PC-3 (cell line): ENCODE measurements at regions of chrX and their contacts with region 1.

Region 1: GRCh38 chrX:22889819-22890218 is 109.9 kb upstream of the DDX53 start:
- DNase-seq: peak; percentile 4
- ATAC-seq: peak; percentile 40
- H3K4me3 ChIP-seq: no peak overlapping the region
- H3K27ac ChIP-seq: peak overlapping the region; percentile 54
- H3K4me1 ChIP-seq: peaks cover 26% of the 10 kb centered on the region
- H3K27me3 ChIP-seq: no peaks in the 10 kb centered on the region
- CTCF ChIP-seq: no peak

Region 2: GRCh38 chrX:22399437-22400192 is 490.2 kb before region 1 on chrX:
- CTCF ChIA-PET with region 1: no interaction called
- POLR2A ChIA-PET with region 1: no interaction called
- intact Hi-C with region 1: no loop called
- DNase-seq: peak; percentile 33
- ATAC-seq: peak; percentile 42; the same call in 1 of the 2 replicates
- H3K4me3 ChIP-seq: no peak overlapping the region
- H3K27ac ChIP-seq: peak overlapping the region; percentile 12; the same call in 1 of the 2 replicates
- H3K4me1 ChIP-seq: peaks cover 11% of the 10 kb centered on the region
- H3K27me3 ChIP-seq: no peaks in the 10 kb centered on the region
- CTCF ChIP-seq: no peak

Region 3: GRCh38 chrX:22810876-22811275 is 78.9 kb before region 1 on chrX:
- CTCF ChIA-PET with region 1: no interaction called
- POLR2A ChIA-PET with region 1: no interaction called
- intact Hi-C with region 1: loop called (anchors 2 kb)
- DNase-seq: peak; percentile 1
- ATAC-seq: peak; percentile 68
- H3K4me3 ChIP-seq: no peak overlapping the region
- H3K27ac ChIP-seq: no peak overlapping the region
- H3K4me1 ChIP-seq: peaks cover 9% of the 10 kb centered on the region
- H3K27me3 ChIP-seq: no peaks in the 10 kb centered on the region
- CTCF ChIP-seq: no peak

Region 4: DNA sequence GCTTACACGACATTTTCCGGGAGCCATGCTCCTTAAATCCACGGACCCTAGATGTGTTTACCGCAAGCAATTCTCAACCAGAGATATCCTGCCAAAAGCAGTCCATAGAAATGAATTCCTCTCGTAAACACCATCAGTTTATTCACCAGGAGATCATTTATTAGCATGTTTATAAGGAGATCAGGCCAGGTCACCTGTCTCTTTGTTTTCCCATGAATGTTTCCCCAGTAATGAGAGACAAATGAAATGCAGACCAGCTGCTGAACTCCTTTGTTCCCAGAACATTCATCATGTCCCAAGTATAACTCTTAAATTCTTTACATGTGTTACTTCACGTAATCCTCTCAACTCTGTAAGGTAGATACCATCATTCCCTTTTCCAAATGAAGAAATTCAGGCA is 247.0 kb after region 1 on chrX:
- CTCF ChIA-PET with region 1: no interaction called
- POLR2A ChIA-PET with region 1: no interaction called
- intact Hi-C with region 1: no loop called
- DNase-seq: no peak
- ATAC-seq: no peak
- H3K4me3 ChIP-seq: no peak overlapping the region
- H3K27ac ChIP-seq: no peak overlapping the region
- H3K4me1 ChIP-seq: no peaks in the 10 kb centered on the region
- H3K27me3 ChIP-seq: no peaks in the 10 kb centered on the region
- CTCF ChIP-seq: no peak

Region 5: GRCh38 chrX:23292988-23293651 is 403.3 kb after region 1 on chrX:
- CTCF ChIA-PET with region 1: no interaction called
- POLR2A ChIA-PET with region 1: no interaction called
- intact Hi-C with region 1: no loop called
- DNase-seq: peak; percentile 49
- ATAC-seq: peak; percentile 92
- H3K4me3 ChIP-seq: no peak overlapping the region
- H3K27ac ChIP-seq: no peak overlapping the region
- H3K4me1 ChIP-seq: peaks cover 5% of the 10 kb centered on the region; the same call in 1 of the 2 replicates
- H3K27me3 ChIP-seq: no peaks in the 10 kb centered on the region
- CTCF ChIP-seq: no peak